MCF 10A (cell line): ENCODE measurements at regions of chr9 and their contacts with region 1.

Region 1: DNA sequence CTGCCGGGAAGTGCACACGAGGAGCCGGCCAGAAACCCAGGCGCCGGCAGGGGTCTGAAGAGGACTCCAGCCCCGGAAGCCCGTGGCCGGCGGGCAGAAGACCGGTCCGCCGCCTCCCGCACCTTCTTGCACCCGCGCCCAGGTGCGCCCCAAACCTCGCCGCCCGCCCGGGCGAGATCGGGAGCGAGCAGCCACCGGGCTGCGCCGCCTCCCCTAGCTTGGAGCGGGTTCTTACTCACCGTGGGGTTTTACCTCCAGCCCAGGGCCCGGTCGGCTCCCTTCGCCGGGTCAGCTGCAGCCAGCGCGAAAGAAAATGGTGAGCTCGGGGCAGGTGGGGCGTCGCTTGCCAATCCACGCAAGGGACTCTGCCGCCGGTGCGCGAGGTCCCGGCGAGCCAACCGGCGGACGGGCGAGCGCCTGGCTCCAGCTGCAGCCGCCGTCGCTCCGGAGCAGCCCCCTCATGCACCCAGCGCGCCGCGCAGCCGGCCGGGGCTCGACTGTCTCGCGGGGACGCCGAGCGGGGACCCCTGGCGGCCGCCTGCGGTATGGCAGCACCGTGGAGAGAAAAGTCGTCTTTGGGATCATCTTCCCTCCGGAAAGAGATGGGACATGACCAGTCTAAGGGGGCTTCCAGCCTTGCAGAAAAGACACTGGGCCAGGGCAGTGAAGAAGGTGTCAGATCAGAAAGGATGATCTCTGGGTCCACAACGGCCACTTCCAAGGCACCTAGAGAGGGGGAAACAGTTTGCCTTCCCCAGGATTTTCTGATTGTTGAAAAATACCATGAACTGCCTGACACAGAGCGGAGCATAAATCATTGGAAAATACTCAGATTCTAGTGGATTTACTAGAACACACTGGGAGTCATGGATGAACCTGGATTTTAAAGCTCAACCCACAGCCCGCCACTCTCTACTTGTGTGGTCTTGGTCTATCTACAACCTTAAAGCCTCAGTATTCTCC is at the start of gene MOB3B:
- DNase-seq: peak; percentile 71
- H3K4me3 Mint-ChIP-seq: peak within 1 kb of the TSS; percentile 94
- H3K27ac Mint-ChIP-seq: peak within 1 kb of the TSS; percentile 87
- H3K4me1 Mint-ChIP-seq: peaks cover 18% of the 10 kb centered on the region
- H3K27me3 Mint-ChIP-seq: no peaks in the 10 kb centered on the region
- CTCF ChIP-seq: peak; percentile 89
- total RNA-seq, gene MOB3B: 2.2 and 3.7 TPM in 2 replicates

Region 2: DNA sequence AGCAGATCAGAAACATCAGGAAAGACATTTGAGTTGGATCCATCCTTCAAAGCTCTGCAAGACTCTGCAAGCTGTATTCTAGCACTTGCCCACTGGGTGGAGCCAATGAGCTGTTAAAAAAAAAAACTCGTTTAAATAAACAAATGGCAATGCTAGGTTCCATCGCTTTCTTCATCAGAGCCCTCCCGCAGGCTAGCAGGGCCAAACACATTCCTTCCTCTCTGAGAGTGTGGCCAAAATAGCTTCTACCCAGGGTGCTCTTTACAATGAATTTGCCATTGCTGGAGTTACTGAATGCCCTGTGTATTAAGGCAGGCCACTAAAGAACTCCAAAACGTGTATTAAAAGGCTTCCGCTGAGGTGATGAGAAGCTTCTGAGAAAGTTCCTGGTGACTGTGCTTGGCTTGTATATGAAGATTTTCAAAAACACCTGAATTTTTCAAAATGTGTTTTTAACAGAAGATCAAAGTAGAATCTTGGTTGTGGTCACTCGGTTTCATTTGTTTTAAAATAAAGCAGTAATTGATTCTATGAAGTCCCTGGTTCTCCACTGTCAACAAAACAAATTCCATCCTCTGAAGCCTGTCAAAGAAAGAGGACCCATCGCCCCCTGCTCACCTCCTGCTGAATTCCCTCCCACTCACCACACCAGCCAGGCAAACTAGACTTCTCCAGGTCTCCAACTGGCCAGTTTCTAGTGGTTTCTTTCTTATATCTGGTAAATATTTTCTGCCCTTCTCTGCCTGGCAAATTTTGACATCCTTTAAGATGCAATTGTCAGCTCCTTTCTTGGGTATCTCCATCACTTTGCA is 196.2 kb before region 1 on chr9:
- CTCF ChIA-PET with region 1: interaction called, 69 read pairs
- POLR2A ChIA-PET with region 1: interaction called, 29 read pairs
- intact Hi-C with region 1: loop called (anchors 1 kb)
- DNase-seq: peak; percentile 78
- H3K4me3 Mint-ChIP-seq: no peak overlapping the region
- H3K27ac Mint-ChIP-seq: no peak overlapping the region
- H3K4me1 Mint-ChIP-seq: peaks cover 22% of the 10 kb centered on the region
- H3K27me3 Mint-ChIP-seq: no peaks in the 10 kb centered on the region
- CTCF ChIP-seq: peak; percentile 82

Region 3: GRCh38 chr9:27427273-27427645 is 102.3 kb before region 1 on chr9:
- CTCF ChIA-PET with region 1: interaction called, 8 read pairs
- POLR2A ChIA-PET with region 1: interaction called, 9 read pairs
- intact Hi-C with region 1: loop called (anchors 5 kb)
- DNase-seq: peak; percentile 75
- H3K4me3 Mint-ChIP-seq: no peak overlapping the region
- H3K27ac Mint-ChIP-seq: peak overlapping the region; percentile 92
- H3K4me1 Mint-ChIP-seq: peaks cover 41% of the 10 kb centered on the region
- H3K27me3 Mint-ChIP-seq: no peaks in the 10 kb centered on the region
- CTCF ChIP-seq: no peak

Region 4: DNA sequence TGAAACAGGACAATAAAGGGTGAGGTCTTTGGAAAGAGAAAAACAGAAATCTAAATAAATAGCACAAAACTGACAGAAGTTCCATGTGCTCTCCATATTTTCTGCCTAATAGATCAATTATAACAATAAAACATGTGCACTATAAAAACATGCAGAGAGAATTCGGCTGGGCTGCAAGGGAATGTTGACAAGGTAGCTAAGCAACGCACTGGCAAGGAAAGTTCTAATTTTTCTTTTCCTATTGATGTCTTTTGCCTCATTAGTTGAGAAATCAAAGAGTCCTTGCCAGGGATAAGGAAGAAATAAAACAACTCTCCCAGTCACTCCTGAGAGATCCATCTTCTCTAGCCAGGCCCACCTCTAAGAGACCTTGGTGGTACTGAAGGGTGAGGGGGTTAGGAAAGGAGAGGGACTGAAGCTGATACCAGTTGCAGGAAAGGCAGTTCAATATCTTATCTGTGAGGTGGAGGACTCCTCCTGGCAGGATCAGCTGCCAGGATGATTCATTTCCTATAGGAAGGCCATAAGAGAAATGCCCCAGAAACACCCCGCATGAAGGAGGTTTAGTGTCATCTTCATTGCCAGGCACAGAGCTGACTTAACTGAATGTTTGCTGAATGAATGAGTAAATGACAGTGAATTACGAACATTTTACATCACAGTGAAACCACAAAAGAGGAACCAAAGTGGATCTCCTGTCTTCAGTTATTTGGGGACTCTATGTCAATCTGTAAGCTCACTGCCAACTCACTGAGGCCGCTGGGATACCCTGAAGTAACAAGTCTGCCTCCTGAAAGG is 69.2 kb before region 1 on chr9:
- CTCF ChIA-PET with region 1: interaction called, 11 read pairs
- POLR2A ChIA-PET with region 1: no interaction called
- intact Hi-C with region 1: no loop called
- DNase-seq: peak; percentile 70
- H3K4me3 Mint-ChIP-seq: no peak overlapping the region
- H3K27ac Mint-ChIP-seq: peak overlapping the region; percentile 44
- H3K4me1 Mint-ChIP-seq: peaks cover 35% of the 10 kb centered on the region
- H3K27me3 Mint-ChIP-seq: no peaks in the 10 kb centered on the region
- CTCF ChIP-seq: no peak

Region 5: GRCh38 chr9:27539479-27540441 is 10.2 kb after region 1 on chr9:
- CTCF ChIA-PET with region 1: interaction called, 17 read pairs
- POLR2A ChIA-PET with region 1: interaction called, 34 read pairs
- intact Hi-C with region 1: no loop called
- DNase-seq: peak; percentile 90
- H3K4me3 Mint-ChIP-seq: peak overlapping the region; percentile 63
- H3K27ac Mint-ChIP-seq: peak overlapping the region; percentile 98
- H3K4me1 Mint-ChIP-seq: peaks cover 32% of the 10 kb centered on the region
- H3K27me3 Mint-ChIP-seq: no peaks in the 10 kb centered on the region
- CTCF ChIP-seq: no peak

Region 6: DNA sequence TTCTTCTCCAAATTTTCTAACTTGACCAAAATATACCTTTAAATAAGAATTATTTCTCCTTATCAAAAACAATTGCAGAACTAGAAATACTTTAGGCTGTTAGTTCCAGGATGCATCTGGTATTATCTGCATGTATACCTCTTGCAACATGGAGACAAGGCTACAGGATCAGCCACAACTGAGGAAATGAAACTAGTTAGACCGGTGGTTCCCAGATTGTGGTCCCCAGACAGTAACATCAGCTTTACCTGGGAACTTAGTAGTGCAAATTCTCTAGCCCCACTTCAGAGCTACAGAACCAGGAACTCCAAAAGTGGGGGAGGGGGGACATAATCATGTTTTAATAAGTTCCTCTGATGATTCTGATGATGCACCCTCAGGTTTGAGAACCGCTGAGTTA is 105.3 kb after region 1 on chr9:
- CTCF ChIA-PET with region 1: no interaction called
- POLR2A ChIA-PET with region 1: no interaction called
- intact Hi-C with region 1: no loop called
- DNase-seq: no peak
- H3K4me3 Mint-ChIP-seq: no peak overlapping the region
- H3K27ac Mint-ChIP-seq: no peak overlapping the region
- H3K4me1 Mint-ChIP-seq: peaks cover 6% of the 10 kb centered on the region
- H3K27me3 Mint-ChIP-seq: no peaks in the 10 kb centered on the region
- CTCF ChIP-seq: no peak